ENCODE measurements at regions of chr1 and their contacts with region 1.

Region 1: GRCh38 chr1:229479660-229480399 is 28.3 kb downstream of the NUP133 start:
- DNase-seq: no peak
- ATAC-seq: no peak
- H3K4me3 ChIP-seq: no peak overlapping the region
- H3K27ac ChIP-seq: no peak overlapping the region
- H3K4me1 ChIP-seq: no peaks in the 10 kb centered on the region
- H3K27me3 ChIP-seq: no peaks in the 10 kb centered on the region
- CTCF ChIP-seq: no peak
- POLR2A ChIP-seq: no peak
- RAD21 ChIP-seq: no peak

Region 2: DNA sequence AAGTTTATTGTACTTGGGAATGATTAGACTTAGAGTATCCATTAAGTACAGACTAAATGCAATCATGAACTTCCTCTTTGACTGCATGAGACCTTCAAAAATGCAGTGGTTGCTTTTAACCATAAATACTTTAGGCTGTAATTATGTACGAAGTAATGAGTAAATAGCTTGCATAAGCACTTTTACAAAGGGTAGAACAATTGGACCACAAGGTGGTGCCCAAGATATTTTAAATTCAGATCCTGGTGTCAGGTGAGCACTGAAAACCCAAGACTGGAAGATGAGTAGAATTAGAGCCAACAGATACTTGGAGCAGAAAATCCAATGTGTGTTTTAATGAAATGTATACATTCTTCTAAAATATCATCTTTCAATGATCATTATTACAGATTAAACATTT is 787.9 kb before region 1 on chr1:
- CTCF ChIA-PET with region 1: no interaction called
- POLR2A ChIA-PET with region 1: no interaction called
- RAD21 ChIA-PET with region 1: no interaction called
- intact Hi-C with region 1: loop called (anchors 10 kb)
- DNase-seq: peak; percentile 67
- ATAC-seq: peak; percentile 82
- H3K4me3 ChIP-seq: no peak overlapping the region
- H3K27ac ChIP-seq: no peak overlapping the region
- H3K4me1 ChIP-seq: peaks cover 4 to 10% of the 10 kb centered on the region in 2 experiments; a peak in 3 of 4 replicates
- H3K27me3 ChIP-seq: peaks cover 6% of the 10 kb centered on the region; the same call in 1 of the 2 replicates
- CTCF ChIP-seq: peak; percentile 39 to 80 (median 65)
- POLR2A ChIP-seq: no peak
- RAD21 ChIP-seq: peak; percentile 90

Region 3: DNA sequence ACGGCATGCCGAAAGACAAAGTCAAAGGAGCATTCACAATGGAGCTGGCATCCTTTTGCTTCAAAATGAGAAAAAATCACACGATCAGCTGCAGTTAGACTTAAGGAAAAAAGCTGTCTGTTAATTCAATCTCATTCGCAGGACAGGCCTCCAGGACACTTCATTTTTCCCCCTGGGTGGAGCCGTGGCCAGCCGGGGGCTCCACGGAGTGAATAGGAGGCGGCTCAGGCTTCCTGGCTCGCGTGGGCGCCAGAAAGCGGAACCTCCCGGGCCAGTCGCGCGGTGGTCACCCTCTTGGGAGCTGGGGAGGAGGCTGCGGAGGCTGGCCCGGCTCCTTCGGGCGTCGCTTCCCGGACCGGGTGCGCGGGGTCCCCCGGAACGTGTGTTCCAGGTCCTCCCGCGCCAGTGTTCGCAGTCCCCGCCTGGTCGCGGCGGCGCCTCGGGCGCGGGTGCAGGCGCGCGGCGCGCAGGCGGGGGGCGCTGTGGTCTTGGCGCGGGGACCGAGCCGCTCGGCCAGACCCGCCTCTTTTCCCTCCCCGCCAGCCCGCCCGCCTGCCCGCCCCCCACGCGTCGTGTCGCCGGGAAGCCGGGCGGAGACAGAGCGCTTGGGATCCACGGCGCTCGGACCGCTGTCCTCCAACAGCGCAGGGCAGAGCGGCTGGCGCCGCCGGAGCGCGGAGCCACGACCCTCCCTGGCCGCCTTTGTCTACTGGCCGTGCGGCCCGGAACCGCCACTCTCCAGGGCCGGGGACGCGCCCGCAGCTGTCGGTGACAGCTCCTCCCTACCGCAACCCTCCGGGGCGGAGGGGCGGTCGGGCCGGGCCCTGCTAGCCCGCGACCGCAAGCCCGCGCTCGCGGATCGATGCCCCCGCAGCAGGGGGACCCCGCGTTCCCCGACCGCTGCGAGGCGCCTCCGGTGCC is 744.7 kb before region 1 on chr1 and contains the start of gene RHOU:
- CTCF ChIA-PET with region 1: no interaction called
- POLR2A ChIA-PET with region 1: no interaction called
- RAD21 ChIA-PET with region 1: no interaction called
- intact Hi-C with region 1: no loop called
- DNase-seq: peak; percentile 12
- ATAC-seq: peak; percentile 90
- H3K4me3 ChIP-seq: peak within 1 kb of the TSS; percentile 53 to 62
- H3K27ac ChIP-seq: peak within 1 kb of the TSS; percentile 45; the same call in 1 of the 2 replicates
- H3K4me1 ChIP-seq: peaks cover 13 to 16% of the 10 kb centered on the region in 2 experiments; a peak in 3 of 4 replicates
- H3K27me3 ChIP-seq: no peaks in the 10 kb centered on the region
- CTCF ChIP-seq: peak in 2 of 3 experiments; percentile 8 to 30; a peak in 2 of 6 replicates
- POLR2A ChIP-seq: no peak
- RAD21 ChIP-seq: peak; percentile 39
- total RNA-seq, gene RHOU: 4.0 TPM

Region 4: DNA sequence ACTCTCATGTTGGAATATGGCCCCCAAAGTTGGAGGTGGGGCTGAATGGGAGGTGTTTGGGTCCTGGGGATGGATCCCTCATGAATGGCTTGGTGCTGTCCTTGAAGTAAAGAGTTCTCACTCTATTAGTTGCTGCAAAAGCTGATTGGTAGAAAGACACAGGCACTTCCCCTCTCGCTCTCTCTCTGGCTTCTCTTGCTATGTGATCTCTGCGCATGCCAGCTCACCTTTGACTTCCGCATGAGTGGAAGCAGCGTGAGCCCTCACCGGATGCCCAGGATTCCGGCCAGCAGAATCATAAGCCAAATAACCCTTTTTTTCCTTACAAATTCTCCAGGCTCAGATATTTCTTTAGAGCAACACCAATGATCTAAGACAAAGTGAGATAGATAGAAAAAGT is 116.1 kb before region 1 on chr1:
- CTCF ChIA-PET with region 1: no interaction called
- POLR2A ChIA-PET with region 1: no interaction called
- RAD21 ChIA-PET with region 1: no interaction called
- intact Hi-C with region 1: no loop called
- DNase-seq: no peak
- ATAC-seq: no peak
- H3K4me3 ChIP-seq: no peak overlapping the region
- H3K27ac ChIP-seq: no peak overlapping the region
- H3K4me1 ChIP-seq: no peaks in the 10 kb centered on the region
- H3K27me3 ChIP-seq: no peaks in the 10 kb centered on the region
- CTCF ChIP-seq: no peak
- POLR2A ChIP-seq: no peak
- RAD21 ChIP-seq: no peak

Region 5: DNA sequence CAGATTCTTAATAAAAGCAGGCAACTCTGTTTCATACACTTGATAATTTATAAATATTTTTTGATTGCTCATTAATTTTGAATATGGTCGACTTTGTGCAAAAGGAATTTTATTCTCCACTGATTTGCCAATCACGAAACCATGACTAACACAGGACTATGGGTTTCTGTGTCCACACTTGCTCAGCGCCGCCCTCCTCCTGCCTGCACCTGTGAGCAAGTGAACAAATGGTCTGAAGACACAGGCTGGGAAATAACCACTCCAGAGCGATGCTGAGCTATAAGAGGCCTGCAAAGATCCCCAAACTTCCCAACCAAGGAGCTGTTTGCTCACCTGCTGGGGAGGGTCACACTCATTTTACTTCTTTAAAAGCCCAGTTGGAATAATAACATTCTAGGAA is 59.1 kb after region 1 on chr1:
- CTCF ChIA-PET with region 1: no interaction called
- POLR2A ChIA-PET with region 1: no interaction called
- RAD21 ChIA-PET with region 1: no interaction called
- intact Hi-C with region 1: no loop called
- DNase-seq: no peak
- ATAC-seq: no peak
- H3K4me3 ChIP-seq: no peak overlapping the region
- H3K27ac ChIP-seq: no peak overlapping the region
- H3K4me1 ChIP-seq: no peaks in the 10 kb centered on the region
- H3K27me3 ChIP-seq: no peaks in the 10 kb centered on the region
- CTCF ChIP-seq: no peak
- POLR2A ChIP-seq: no peak
- RAD21 ChIP-seq: no peak

Region 6: DNA sequence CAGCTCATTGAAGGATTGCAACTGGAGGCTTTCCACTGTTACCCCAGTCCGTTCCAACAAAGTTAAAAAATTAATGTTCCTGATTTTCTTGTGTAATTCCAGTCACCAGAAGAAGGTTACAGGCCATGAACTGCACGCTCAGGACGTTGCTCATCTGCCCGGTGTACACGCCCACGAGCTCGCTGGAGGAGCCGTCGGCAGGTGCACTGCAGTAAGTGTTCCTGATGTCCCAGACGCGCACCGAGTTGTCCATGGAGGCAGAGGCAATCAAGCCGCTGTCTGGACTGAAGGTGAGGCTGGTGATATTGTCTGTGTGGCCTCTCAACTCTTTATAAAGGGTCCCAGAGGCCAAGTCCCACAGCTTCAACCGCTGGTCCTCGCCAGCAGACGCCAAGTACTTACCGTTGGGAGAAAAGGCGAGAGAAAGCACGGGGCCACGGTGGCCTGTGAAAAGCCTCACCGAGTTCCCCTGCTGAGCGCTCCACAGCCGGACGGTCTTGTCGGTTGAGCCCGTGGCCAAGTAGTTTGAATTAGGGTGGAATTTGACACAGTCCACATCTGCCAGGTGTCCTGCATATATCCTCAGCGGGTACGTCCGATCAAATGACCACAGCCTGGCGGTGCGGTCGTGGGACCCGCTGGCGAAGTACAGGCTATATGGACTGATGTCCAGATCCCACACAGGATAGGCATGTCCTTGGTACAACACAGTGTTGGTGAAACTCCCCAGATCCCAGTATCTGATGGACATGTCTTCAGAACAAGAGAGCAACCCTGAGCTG is 114.6 kb after region 1 on chr1:
- CTCF ChIA-PET with region 1: no interaction called
- POLR2A ChIA-PET with region 1: no interaction called
- RAD21 ChIA-PET with region 1: no interaction called
- intact Hi-C with region 1: no loop called
- DNase-seq: no peak
- ATAC-seq: no peak
- H3K4me3 ChIP-seq: no peak overlapping the region
- H3K27ac ChIP-seq: no peak overlapping the region
- H3K4me1 ChIP-seq: no peaks in the 10 kb centered on the region
- H3K27me3 ChIP-seq: no peaks in the 10 kb centered on the region
- CTCF ChIP-seq: no peak
- POLR2A ChIP-seq: no peak
- RAD21 ChIP-seq: no peak